H1 (cell line): ENCODE measurements at regions of chr12 and their contacts with region 1.

Region 1: DNA sequence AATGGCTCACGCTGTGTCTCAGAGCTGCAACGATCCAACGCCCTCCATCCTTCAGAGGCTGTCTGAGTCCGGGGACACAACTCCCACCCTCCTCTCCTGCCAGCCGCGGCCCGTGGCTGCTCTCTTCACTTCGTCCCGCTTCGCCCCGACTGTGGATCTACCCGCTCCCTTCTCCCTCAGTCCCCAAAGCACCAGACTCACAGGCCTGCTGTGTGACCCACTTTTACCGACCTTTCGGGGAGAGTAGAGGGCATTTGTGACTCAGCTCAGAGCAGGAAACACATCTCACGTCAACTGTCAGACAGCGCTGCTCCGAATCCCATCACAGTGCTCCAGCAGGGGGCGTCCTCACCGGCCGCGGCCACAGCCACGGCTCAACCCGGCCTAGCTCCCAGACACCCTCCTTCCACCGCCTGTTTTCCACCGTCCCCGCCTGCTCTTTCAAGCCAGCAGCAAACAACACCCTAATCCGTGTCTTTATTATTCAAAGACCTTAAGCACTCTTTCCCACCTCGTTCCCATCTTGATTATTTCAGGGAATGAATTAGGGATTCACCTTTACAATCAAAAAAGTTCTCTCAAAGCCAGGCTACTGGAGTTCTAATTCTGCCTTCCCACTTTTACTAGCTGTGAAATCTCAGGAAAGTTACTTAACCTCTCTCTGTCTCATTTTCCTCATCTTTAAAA is 5.0 kb upstream of the AQP2 start:
- DNase-seq: peak; percentile 77 to 97
- H3K4me3 ChIP-seq: peak overlapping the region in 2 of 4 experiments; percentile 16 to 44; a peak in 4 of 8 replicates
- H3K27ac ChIP-seq: no peak overlapping the region
- H3K4me1 ChIP-seq: peaks cover 3 to 17% (median 4%) of the 10 kb centered on the region in 4 experiments; a peak in 6 of 7 replicates
- H3K27me3 ChIP-seq: peaks cover 0 to 3% (median 0%) of the 10 kb centered on the region in 4 experiments; a peak in 1 of 7 replicates
- CTCF ChIP-seq: peak; percentile 87 to 95 (median 89)
- EP300 ChIP-seq: no peak
- POLR2A ChIP-seq: no peak
- RAD21 ChIP-seq: peak; percentile 54 to 64

Region 2: GRCh38 chr12:49893753-49894752 is 51.5 kb before region 1 on chr12:
- CTCF ChIA-PET with region 1: interaction called, 15 read pairs
- POLR2A ChIA-PET with region 1: interaction called, 4 read pairs
- DNase-seq: no peak
- H3K4me3 ChIP-seq: no peak overlapping the region
- H3K27ac ChIP-seq: no peak overlapping the region
- H3K4me1 ChIP-seq: peaks cover 0 to 10% (median 6%) of the 10 kb centered on the region in 4 experiments; a peak in 5 of 7 replicates
- H3K27me3 ChIP-seq: peaks cover 0 to 11% (median 2%) of the 10 kb centered on the region in 4 experiments; a peak in 5 of 7 replicates
- CTCF ChIP-seq: no peak
- EP300 ChIP-seq: no peak
- POLR2A ChIP-seq: no peak
- RAD21 ChIP-seq: no peak

Region 3: GRCh38 chr12:49930515-49931288 is 14.8 kb before region 1 on chr12:
- CTCF ChIA-PET with region 1: interaction called, 53 read pairs
- POLR2A ChIA-PET with region 1: interaction called, 4 read pairs
- DNase-seq: no peak
- H3K4me3 ChIP-seq: no peak overlapping the region
- H3K27ac ChIP-seq: no peak overlapping the region
- H3K4me1 ChIP-seq: no peaks in the 10 kb centered on the region
- H3K27me3 ChIP-seq: no peaks in the 10 kb centered on the region; a peak in 1 of 7 replicates
- CTCF ChIP-seq: no peak
- EP300 ChIP-seq: no peak
- POLR2A ChIP-seq: no peak
- RAD21 ChIP-seq: no peak

Region 4: GRCh38 chr12:49959570-49960465 is 14.3 kb after region 1 on chr12:
- CTCF ChIA-PET with region 1: interaction called, 104 read pairs
- POLR2A ChIA-PET with region 1: interaction called, 6 read pairs
- DNase-seq: peak in 1 of 2 experiments; percentile 60
- H3K4me3 ChIP-seq: peak overlapping the region in 1 of 4 experiments; percentile 59; a peak in 1 of 8 replicates
- H3K27ac ChIP-seq: no peak overlapping the region
- H3K4me1 ChIP-seq: peaks cover 4 to 24% (median 17%) of the 10 kb centered on the region in 4 experiments
- H3K27me3 ChIP-seq: peaks cover 12 to 67% (median 55%) of the 10 kb centered on the region in 4 experiments
- CTCF ChIP-seq: no peak
- EP300 ChIP-seq: no peak
- POLR2A ChIP-seq: no peak; a peak in 1 of 3 replicates
- RAD21 ChIP-seq: no peak